Calu3 (cell line): ENCODE measurements at regions of chr4 and their contacts with region 1.

Region 1: DNA sequence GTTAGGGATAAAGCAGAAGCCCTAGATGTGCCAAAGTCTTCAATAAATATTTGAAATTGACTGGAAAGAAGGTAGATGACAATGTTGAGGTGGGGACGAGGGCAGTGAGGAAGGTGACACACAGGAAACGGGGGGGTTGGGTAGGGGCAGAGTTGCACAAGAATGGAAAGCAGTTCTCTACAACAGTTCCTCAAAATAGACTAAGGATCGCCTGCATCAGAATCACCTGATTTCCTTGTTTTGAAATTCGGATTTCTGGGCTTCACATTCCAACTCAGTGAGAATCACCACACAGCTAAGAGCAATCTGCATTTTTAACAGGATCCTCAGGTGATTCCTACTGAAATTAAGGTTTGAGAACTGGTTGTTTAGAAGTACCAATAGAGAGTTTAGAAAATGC is 70.6 kb downstream of the ARFIP1 start:
- DNase-seq: peak; percentile 34
- H3K4me3 Mint-ChIP-seq: peak overlapping the region; percentile 51
- H3K27ac Mint-ChIP-seq: peak overlapping the region; percentile 97
- H3K4me1 Mint-ChIP-seq: peaks cover 27% of the 10 kb centered on the region
- H3K27me3 Mint-ChIP-seq: no peaks in the 10 kb centered on the region
- CTCF ChIP-seq: no peak

Region 2: GRCh38 chr4:152779513-152780266 is 70.7 kb before region 1 on chr4 and contains the starts of genes ARFIP1 and TIGD4:
- CTCF ChIA-PET with region 1: no interaction called
- intact Hi-C with region 1: no loop called
- DNase-seq: peak; percentile 96
- H3K4me3 Mint-ChIP-seq: peak within 1 kb of the TSS; percentile 97
- H3K27ac Mint-ChIP-seq: peak within 1 kb of the TSS; percentile 83
- H3K4me1 Mint-ChIP-seq: peaks cover 32% of the 10 kb centered on the region
- H3K27me3 Mint-ChIP-seq: no peaks in the 10 kb centered on the region
- CTCF ChIP-seq: peak; percentile 16
- total RNA-seq, gene ARFIP1: 35.5 and 38.1 TPM in 2 replicates
- total RNA-seq, gene TIGD4: 0.78 and 0.92 TPM in 2 replicates

Region 3: GRCh38 chr4:152937336-152938236 is 87.2 kb after region 1 on chr4:
- CTCF ChIA-PET with region 1: interaction called, 5 read pairs
- intact Hi-C with region 1: loop called (anchors 10 kb)
- DNase-seq: peak; percentile 23
- H3K4me3 Mint-ChIP-seq: peak overlapping the region; percentile 74
- H3K27ac Mint-ChIP-seq: no peak overlapping the region
- H3K4me1 Mint-ChIP-seq: peaks cover 19% of the 10 kb centered on the region
- H3K27me3 Mint-ChIP-seq: no peaks in the 10 kb centered on the region
- CTCF ChIP-seq: no peak

Region 4: DNA sequence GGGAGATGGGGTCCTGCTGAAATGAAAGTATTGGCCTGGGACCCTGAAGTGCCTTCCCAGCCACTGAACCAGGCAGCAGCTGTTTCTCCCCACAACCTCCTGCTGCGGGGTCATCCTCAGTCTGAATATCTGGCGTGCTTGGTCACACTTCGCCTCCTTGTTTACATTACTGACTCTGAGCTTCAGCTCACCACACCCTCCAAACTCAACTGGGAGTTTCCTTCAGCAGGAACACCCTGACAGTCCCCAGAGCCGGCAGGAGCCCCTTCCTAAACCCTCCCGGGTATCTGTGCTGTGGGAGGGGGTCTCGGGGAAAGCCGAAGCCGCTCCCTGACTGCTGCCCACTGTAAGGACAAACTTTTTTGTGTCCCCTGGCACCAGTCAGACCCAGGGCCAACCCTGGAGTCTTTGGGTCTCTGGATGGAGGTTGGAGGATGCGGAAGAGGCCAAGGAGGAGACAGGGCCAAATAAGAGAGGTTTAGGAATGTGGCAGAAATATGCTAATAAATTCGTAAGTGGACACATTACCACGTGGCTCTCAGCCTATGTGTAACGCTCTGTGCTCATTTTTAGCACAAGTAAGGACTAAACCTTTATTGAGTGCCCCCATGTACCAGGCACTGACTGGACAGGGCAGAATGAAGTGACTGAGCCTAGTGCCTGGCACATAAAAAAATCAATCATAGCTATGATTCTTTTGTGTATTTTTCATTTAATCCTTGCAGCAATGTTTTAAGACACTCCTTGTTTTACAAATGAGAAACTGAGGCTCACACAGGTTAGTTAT is 106.5 kb after region 1 on chr4:
- CTCF ChIA-PET with region 1: no interaction called
- intact Hi-C with region 1: loop called (anchors 5 kb)
- DNase-seq: peak; percentile 8
- H3K4me3 Mint-ChIP-seq: no peak overlapping the region
- H3K27ac Mint-ChIP-seq: no peak overlapping the region
- H3K4me1 Mint-ChIP-seq: peaks cover 21% of the 10 kb centered on the region
- H3K27me3 Mint-ChIP-seq: no peaks in the 10 kb centered on the region
- CTCF ChIP-seq: no peak

Region 5: GRCh38 chr4:153083447-153083947 is 233.1 kb after region 1 on chr4:
- CTCF ChIA-PET with region 1: no interaction called
- intact Hi-C with region 1: loop called (anchors 1 kb)
- DNase-seq: peak; percentile 61
- H3K4me3 Mint-ChIP-seq: no peak overlapping the region
- H3K27ac Mint-ChIP-seq: peak overlapping the region; percentile 33
- H3K4me1 Mint-ChIP-seq: peaks cover 18% of the 10 kb centered on the region
- H3K27me3 Mint-ChIP-seq: no peaks in the 10 kb centered on the region
- CTCF ChIP-seq: peak; percentile 51

Region 6: DNA sequence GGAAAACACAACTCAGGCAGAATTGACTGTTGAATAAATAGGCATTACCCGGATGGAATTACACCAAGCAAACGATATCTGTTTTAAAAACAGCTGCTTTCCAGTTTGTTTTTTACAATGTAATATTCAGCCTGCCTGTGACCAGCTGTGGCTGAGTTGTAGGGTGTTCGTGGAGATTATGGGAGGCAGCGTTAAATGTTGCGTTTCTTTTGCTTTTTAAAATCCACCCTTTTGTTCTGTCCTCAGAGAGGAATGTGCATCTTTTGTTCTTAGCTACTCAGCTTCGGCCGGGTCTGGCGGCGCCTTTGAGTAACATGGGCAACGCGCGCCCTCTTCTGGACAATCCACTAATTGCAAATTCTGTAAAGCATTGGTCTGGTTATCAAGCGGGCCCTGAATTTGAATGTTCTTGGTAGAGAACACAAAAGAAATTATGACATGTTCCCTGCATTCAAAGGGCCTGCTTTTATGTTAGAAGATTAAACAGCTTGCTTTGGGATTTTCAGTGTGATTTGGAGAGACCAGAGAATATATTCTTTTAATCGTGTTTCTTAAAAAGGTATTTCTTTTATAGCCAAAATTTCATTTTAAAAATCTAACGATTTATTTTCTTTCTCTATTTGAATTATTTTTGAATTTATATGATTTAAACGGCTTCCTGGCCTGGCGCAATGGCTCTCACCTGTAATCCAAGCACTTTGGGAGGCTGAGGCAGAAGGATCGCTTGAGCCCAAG is 277.6 kb after region 1 on chr4:
- CTCF ChIA-PET with region 1: interaction called, 8 read pairs
- intact Hi-C with region 1: loop called (anchors 2 kb)
- DNase-seq: peak; percentile 78
- H3K4me3 Mint-ChIP-seq: no peak overlapping the region
- H3K27ac Mint-ChIP-seq: no peak overlapping the region
- H3K4me1 Mint-ChIP-seq: no peaks in the 10 kb centered on the region
- H3K27me3 Mint-ChIP-seq: no peaks in the 10 kb centered on the region
- CTCF ChIP-seq: peak; percentile 39

Region 7: DNA sequence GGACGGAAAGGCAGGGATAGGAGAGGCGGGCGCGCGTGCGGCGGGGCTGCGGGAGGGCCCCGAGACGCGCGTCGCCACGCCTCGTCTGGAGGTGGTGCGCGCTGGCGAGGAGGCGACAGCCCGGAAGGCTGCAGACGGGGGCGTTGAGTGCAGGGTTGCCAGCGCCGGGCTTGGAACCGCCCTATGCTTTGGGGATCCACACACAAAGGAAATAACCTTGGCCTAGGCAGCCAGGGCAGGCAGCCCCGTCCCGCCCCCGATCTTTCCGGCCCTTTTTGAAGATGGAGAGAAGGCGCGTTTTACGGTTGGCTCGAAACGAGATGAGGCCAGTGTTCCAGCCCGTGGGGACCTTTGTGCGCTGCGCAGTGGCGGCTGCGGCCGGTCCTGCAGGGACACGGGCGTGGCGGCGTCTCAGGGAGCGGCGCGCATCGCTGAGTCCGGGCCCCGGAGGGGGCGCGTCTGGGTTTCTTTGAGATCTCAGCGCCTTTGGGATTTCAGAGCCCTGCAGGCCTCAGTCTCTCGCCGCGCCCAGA is 303.0 kb after region 1 on chr4:
- CTCF ChIA-PET with region 1: no interaction called
- intact Hi-C with region 1: no loop called
- DNase-seq: peak; percentile 60
- H3K4me3 Mint-ChIP-seq: peak overlapping the region; percentile 87
- H3K27ac Mint-ChIP-seq: peak overlapping the region; percentile 73
- H3K4me1 Mint-ChIP-seq: peaks cover 23% of the 10 kb centered on the region
- H3K27me3 Mint-ChIP-seq: no peaks in the 10 kb centered on the region
- CTCF ChIP-seq: no peak

Region 8: DNA sequence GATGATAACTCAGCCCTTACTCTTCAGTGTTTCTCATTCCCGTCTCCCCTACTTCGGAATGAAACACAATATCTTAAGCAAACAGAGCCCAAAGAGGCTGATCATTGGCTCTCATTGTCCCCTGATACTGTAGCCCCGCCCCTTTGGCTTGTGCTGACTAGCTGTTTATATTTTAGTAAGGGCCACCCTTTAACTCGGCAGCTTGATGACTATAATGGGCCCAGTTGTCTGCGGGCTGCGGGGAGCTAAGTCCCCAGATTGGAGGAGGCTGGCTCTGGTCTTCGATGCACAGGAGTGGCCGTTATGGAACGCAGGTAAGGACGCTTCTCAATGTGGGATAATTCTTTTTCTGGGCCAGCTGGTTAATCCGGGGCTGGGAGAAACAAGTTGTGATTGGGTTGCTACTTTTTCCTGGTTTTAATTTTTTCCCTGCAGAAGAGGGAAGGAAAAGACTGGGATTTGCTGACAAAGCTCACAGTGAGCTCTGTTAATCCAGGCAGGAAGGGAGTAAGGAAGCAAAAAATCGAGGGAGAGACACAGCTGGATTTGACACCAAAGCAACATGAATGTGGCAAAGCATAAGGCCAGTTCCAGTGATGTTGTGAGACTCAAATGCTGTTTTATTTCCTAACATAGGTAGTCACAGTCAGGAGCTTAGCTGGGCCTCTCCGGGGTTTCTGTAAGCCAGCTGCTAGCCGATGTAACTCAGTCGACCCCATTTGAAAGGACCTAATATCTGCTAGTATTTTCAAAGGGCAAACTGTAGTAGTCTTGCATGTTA is 354.1 kb after region 1 on chr4 and contains the start of gene TRIM2:
- CTCF ChIA-PET with region 1: no interaction called
- intact Hi-C with region 1: no loop called
- DNase-seq: peak; percentile 81
- H3K4me3 Mint-ChIP-seq: peak within 1 kb of the TSS; percentile 86
- H3K27ac Mint-ChIP-seq: peak within 1 kb of the TSS; percentile 92
- H3K4me1 Mint-ChIP-seq: peaks cover 22% of the 10 kb centered on the region
- H3K27me3 Mint-ChIP-seq: no peaks in the 10 kb centered on the region
- CTCF ChIP-seq: no peak
- total RNA-seq, gene TRIM2: 35.5 and 49.6 TPM in 2 replicates